Right lobe of liver (tissue), 6 donors: ENCODE measurements at regions of chr4 and their contacts with region 1.

Region 1: GRCh38 chr4:153781717-153782416 is 7.0 kb downstream of the SFRP2 start:
- DNase-seq: no peak
- ATAC-seq: no peak
- H3K4me3 ChIP-seq: no peak overlapping the region
- H3K27ac ChIP-seq: no peak overlapping the region
- H3K4me1 ChIP-seq: no peaks in the 10 kb centered on the region
- H3K27me3 ChIP-seq: peaks cover 0 to under 1% of the 10 kb centered on the region in 2 donors
- CTCF ChIP-seq: no peak
- POLR2A ChIP-seq: no peak

Region 2: GRCh38 chr4:154082760-154083535 is 301.1 kb after region 1 on chr4:
- intact Hi-C with region 1: loop called in 1 of 2 experiments (anchors 5 kb)
- DNase-seq: no peak
- ATAC-seq: peak; percentile 59 to 67 (median 62)
- H3K4me3 ChIP-seq: no peak overlapping the region
- H3K27ac ChIP-seq: no peak overlapping the region
- H3K4me1 ChIP-seq: no peaks in the 10 kb centered on the region
- H3K27me3 ChIP-seq: no peaks in the 10 kb centered on the region
- CTCF ChIP-seq: peak; percentile 17 to 49 (median 34)
- POLR2A ChIP-seq: no peak